Transverse colon (tissue), 4 donors: ENCODE measurements at regions of chr10 and their contacts with region 1.

Region 1: DNA sequence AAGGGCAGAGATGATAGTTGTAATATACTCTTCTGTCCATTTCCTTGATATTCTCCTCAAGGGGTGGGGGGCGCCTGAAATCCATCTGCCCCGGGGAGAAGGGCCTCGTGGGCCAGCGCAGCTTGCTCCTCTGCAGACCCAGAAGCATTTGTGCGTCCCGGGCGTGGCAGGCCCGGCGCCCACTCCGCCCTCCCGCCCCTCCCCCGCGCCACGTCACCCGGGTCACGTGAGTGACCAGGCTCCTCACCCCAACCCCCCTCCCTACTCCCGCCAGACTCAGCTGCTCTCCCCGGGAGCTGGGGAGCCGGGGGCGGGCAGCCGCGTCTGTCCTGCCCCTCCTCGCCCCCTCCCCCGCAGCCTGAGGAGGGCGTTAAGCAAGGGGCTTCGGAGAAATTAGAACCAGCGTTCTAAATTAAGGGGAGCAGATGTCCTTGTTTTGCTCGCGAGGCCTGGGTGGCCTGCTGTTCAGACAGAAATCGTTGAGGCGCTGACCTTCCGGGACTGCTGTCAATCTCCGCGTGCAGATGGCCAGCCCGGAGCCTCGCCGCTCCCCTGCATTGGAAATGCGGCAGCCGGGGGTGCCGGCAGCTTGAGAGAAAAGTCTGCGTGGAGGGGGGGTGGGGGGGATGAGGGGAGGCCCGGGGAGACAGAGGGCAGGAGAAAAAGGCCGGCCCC is 102.1 kb upstream of the ZNF438 start:
- DNase-seq: peak; percentile 85
- H3K4me3 ChIP-seq: peak overlapping the region; percentile 1 to 59 (median 38)
- H3K27ac ChIP-seq: peak overlapping the region; percentile 75 to 87 (median 86)
- H3K4me1 ChIP-seq: peaks cover 5 to 24% (median 21%) of the 10 kb centered on the region in 4 donors
- H3K27me3 ChIP-seq: no peaks in the 10 kb centered on the region
- CTCF ChIP-seq: no peak
- EP300 ChIP-seq: no peak
- POLR2A ChIP-seq: no peak

Region 2: DNA sequence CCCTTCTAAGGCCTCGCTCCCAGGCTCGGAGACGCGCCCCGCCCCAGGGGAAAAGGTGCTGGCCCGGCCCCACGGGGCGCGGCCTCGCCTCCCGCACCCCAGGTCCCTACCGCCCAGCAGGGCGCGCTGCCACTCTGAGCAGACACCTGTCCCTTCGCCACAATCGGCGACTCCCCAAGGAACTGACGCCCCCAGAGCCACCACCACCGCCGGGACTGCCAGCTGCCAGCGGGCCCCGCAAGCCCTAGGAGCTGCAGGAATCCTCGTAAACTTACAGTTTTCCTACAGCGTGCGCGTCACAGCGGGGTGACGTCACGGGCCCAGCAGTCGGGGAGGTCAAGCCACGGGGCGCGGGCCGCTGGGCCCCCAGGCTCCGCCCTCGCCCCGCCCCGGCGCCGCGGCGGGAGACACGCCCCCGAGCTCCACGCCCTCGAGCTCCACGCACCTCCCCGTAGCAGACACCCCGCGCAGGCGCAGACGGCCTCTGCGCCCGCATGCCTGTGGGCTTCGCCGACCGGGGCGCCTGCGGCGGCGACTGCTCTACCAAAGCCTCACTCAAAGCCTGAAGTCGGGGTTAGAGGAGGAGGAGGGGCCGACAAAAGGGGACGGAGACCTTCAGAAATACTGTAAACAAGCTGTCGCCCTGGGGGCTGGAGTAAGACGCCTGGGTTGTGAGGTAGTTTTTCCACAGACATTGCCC is 102.1 kb before region 1 on chr10 and contains the start of gene ZNF438:
- in situ Hi-C with region 1: no loop called
- intact Hi-C with region 1: loop called (anchors 5 kb)
- DNase-seq: peak; percentile 97
- H3K4me3 ChIP-seq: peak within 1 kb of the TSS; percentile 48 to 73 (median 52)
- H3K27ac ChIP-seq: peak within 1 kb of the TSS; percentile 98 to 100 (median 99)
- H3K4me1 ChIP-seq: peaks cover 2 to 22% (median 8%) of the 10 kb centered on the region in 4 donors
- H3K27me3 ChIP-seq: no peaks in the 10 kb centered on the region
- CTCF ChIP-seq: peak; percentile 45 to 92 (median 62)
- EP300 ChIP-seq: peak; percentile 7
- POLR2A ChIP-seq: peak; percentile 80
- total RNA-seq, gene ZNF438: 4.4 to 7.4 (median 6.4) TPM

Region 3: GRCh38 chr10:31759799-31760626 is 626.2 kb after region 1 on chr10:
- in situ Hi-C with region 1: loop called in 1 of 4 experiments (anchors 25 kb)
- intact Hi-C with region 1: no loop called
- DNase-seq: peak; percentile 96
- H3K4me3 ChIP-seq: peak overlapping the region; percentile 51 to 84 (median 70)
- H3K27ac ChIP-seq: peak overlapping the region; percentile 92 to 99 (median 96)
- H3K4me1 ChIP-seq: peaks cover 10 to 23% (median 17%) of the 10 kb centered on the region in 4 donors
- H3K27me3 ChIP-seq: no peaks in the 10 kb centered on the region
- CTCF ChIP-seq: no peak
- EP300 ChIP-seq: no peak
- POLR2A ChIP-seq: peak; percentile 94